Naive thymus-derived CD4-positive, alpha-beta T cell (primary cell): ENCODE measurements at regions of chr7 and their contacts with region 1.

Region 1: GRCh38 chr7:104983578-104984539 is 30.1 kb upstream of the KMT2E start:
- DNase-seq: peak; percentile 78 to 86 (median 84)
- ATAC-seq: peak; percentile 94
- H3K4me3 ChIP-seq: peak overlapping the region; percentile 93
- H3K4me3 Mint-ChIP-seq: peak overlapping the region; percentile 93 to 100 (median 99)
- H3K27ac ChIP-seq: peak overlapping the region; percentile 98
- H3K27ac Mint-ChIP-seq: peak overlapping the region; percentile 98 to 100 (median 100)
- H3K4me1 ChIP-seq: peaks cover 19 to 23% of the 10 kb centered on the region in 2 donors
- H3K4me1 Mint-ChIP-seq: peaks cover 27 to 67% (median 55%) of the 10 kb centered on the region in 7 donors
- H3K27me3 ChIP-seq: no peaks in the 10 kb centered on the region
- H3K27me3 Mint-ChIP-seq: no peaks in the 10 kb centered on the region

Region 2: DNA sequence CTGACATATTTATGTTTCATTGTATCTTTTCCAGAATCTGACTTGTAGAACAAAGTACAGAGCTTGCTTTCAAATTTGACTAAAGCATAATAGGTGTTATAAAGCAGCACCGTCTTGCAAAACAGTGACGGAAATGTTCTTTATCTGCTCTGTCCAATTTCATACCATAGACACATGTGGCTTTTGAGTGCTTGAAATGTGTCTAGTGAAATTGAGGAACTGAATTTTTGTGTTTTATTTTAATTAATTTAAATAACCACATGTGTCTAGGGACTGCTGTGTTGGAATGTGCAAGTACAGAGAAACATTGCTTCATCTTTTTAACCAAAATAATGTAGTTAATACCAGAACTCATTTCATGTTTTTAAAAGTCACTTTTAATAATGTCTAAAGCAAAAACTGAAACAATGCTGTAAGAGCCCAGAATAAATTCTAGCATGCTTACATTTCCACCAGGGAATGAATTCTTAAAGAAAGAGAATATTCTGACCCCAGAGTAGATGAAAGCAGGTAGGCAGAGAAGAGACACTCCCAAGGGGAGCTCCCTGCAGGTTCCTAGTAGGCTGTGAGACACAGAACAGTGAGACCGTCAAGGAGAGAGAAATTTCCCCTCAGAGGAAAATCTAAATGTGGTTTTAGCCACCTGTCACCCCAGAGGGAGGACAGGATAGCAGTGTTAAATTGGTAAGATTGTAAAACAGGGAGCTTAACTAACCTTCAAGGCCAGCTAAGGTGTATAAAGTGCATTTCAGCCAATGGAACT is 145.1 kb before region 1 on chr7:
- CTCF ChIA-PET with region 1: no interaction called
- POLR2A ChIA-PET with region 1: no interaction called
- intact Hi-C with region 1: no loop called
- DNase-seq: no peak
- ATAC-seq: no peak
- H3K4me3 ChIP-seq: no peak overlapping the region
- H3K4me3 Mint-ChIP-seq: no peak overlapping the region
- H3K27ac ChIP-seq: no peak overlapping the region
- H3K27ac Mint-ChIP-seq: no peak overlapping the region
- H3K4me1 ChIP-seq: no peaks in the 10 kb centered on the region
- H3K4me1 Mint-ChIP-seq: peaks cover 0 to 2% (median 0%) of the 10 kb centered on the region in 7 donors
- H3K27me3 ChIP-seq: no peaks in the 10 kb centered on the region
- H3K27me3 Mint-ChIP-seq: peaks cover 22 to 45% (median 42%) of the 10 kb centered on the region in 5 donors

Region 3: DNA sequence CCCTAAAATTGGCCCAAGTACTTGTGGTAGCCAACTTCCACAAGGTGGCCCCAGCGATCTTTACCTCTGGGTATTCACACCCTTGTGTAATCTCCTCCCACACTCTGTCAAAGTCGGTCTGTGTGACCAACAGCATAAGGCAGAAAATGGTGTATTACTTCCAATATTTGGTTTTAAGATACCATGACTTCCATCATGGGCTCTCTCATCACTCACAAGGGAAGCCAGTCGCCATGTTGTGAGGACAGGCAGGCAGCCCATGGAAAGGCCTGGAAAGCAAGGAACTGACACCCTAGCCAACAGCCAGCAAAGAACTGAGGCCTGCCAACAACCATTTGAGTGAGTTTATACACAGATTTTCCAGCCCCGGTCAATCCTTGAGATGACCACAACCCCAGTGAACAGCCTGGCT is 60.8 kb before region 1 on chr7:
- CTCF ChIA-PET with region 1: interaction called, 22 read pairs
- POLR2A ChIA-PET with region 1: no interaction called
- intact Hi-C with region 1: loop called (anchors 1 kb)
- DNase-seq: peak; percentile 40 to 69 (median 62)
- ATAC-seq: peak; percentile 94
- H3K4me3 ChIP-seq: no peak overlapping the region
- H3K4me3 Mint-ChIP-seq: no peak overlapping the region
- H3K27ac ChIP-seq: no peak overlapping the region
- H3K27ac Mint-ChIP-seq: peak overlapping the region in 5 of 9 donors; percentile 46 to 68 (median 55)
- H3K4me1 ChIP-seq: no peaks in the 10 kb centered on the region
- H3K4me1 Mint-ChIP-seq: peaks cover 0 to 7% (median 2%) of the 10 kb centered on the region in 7 donors
- H3K27me3 ChIP-seq: no peaks in the 10 kb centered on the region
- H3K27me3 Mint-ChIP-seq: peaks cover 0 to 6% (median 0%) of the 10 kb centered on the region in 5 donors

Region 4: GRCh38 chr7:105013221-105013815 is 29.5 kb after region 1 on chr7:
- CTCF ChIA-PET with region 1: interaction called, 54 read pairs
- POLR2A ChIA-PET with region 1: interaction called, 639 read pairs
- intact Hi-C with region 1: loop called (anchors 1 kb)
- DNase-seq: peak; percentile 93 to 98 (median 96)
- ATAC-seq: peak; percentile 68
- H3K4me3 ChIP-seq: peak overlapping the region; percentile 99
- H3K4me3 Mint-ChIP-seq: peak overlapping the region; percentile 96 to 100 (median 98)
- H3K27ac ChIP-seq: peak overlapping the region; percentile 97
- H3K27ac Mint-ChIP-seq: peak overlapping the region; percentile 99 to 100 (median 100)
- H3K4me1 ChIP-seq: peaks cover 14 to 24% of the 10 kb centered on the region in 2 donors
- H3K4me1 Mint-ChIP-seq: peaks cover 31 to 50% (median 41%) of the 10 kb centered on the region in 7 donors
- H3K27me3 ChIP-seq: no peaks in the 10 kb centered on the region
- H3K27me3 Mint-ChIP-seq: peaks cover 0 to 8% (median 0%) of the 10 kb centered on the region in 5 donors

Region 5: DNA sequence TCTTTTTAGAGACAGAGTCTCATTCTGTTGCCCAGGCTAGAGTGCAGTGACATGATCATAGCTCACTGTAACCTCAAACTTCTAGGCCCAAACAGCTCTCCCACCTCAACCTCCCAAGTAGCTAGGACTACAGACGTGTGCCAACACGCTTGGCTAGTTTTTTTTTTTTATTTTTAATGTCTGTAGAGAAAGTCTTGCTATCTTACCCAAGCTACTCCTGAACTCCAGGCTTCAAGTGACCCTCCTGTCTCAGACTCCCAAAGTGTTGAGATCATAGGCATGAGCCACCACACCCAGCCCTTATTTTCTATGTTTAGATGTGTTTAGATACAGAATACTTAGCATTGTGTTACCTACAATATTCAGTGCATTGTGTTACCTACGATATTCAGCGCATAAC is 76.6 kb after region 1 on chr7:
- CTCF ChIA-PET with region 1: interaction called, 6 read pairs
- POLR2A ChIA-PET with region 1: no interaction called
- intact Hi-C with region 1: loop called in 1 of 2 experiments (anchors 1 kb)
- DNase-seq: no peak
- ATAC-seq: no peak
- H3K4me3 ChIP-seq: no peak overlapping the region
- H3K4me3 Mint-ChIP-seq: no peak overlapping the region
- H3K27ac ChIP-seq: no peak overlapping the region
- H3K27ac Mint-ChIP-seq: peak overlapping the region in 6 of 9 donors; percentile 12 to 85 (median 75)
- H3K4me1 ChIP-seq: peaks cover 4 to 11% of the 10 kb centered on the region in 2 donors
- H3K4me1 Mint-ChIP-seq: peaks cover 37 to 90% (median 81%) of the 10 kb centered on the region in 7 donors
- H3K27me3 ChIP-seq: no peaks in the 10 kb centered on the region
- H3K27me3 Mint-ChIP-seq: no peaks in the 10 kb centered on the region

Region 6: DNA sequence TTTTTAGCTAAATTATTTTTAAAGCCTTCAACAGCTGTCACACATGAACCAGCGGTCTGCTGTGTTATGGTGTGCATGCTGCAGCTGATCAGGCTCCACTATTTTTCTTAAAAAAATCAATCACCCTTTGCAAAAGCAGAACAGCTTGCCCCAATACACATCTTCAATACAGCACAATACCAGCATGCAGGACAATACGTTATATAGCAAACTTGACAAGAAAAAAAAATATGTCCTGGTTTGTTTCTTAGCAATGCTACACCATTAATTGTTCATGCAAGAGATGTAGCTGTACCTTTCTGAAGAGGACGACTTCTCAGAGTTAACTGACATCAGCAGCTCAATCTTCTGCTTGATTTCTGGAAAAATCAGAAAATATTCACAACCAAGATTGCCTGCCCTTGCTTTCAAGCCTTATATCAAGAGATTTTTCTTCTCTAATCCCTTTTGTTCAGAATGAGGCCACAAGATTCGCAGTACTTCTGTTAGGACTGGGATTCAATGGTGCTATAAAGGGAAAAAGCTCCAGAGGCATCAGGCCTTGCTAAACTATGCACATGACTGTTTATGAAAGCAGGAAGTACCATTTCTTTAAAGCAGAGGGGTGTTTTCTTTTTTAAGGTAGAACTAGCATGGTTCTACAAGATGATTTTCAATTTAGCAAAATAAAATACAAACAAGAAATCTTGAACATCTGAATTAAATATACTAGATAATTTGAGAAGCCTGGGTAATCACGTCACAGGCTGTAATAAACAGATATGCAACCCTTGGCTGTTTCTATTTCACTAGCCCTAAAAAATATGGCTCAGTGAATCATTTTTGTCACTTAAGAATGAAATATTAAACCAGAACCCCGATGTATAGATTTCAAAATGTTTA is 284.9 kb after region 1 on chr7:
- CTCF ChIA-PET with region 1: interaction called, 3 read pairs
- POLR2A ChIA-PET with region 1: interaction called, 4 read pairs
- intact Hi-C with region 1: loop called in 1 of 2 experiments (anchors 2 kb)
- DNase-seq: peak in 6 of 9 donors; percentile 30 to 58 (median 46)
- ATAC-seq: peak; percentile 83
- H3K4me3 ChIP-seq: peak overlapping the region; percentile 51
- H3K4me3 Mint-ChIP-seq: peak overlapping the region; percentile 85 to 100 (median 94)
- H3K27ac ChIP-seq: peak overlapping the region; percentile 69
- H3K27ac Mint-ChIP-seq: peak overlapping the region; percentile 81 to 96 (median 91)
- H3K4me1 ChIP-seq: peaks cover 13 to 25% of the 10 kb centered on the region in 2 donors
- H3K4me1 Mint-ChIP-seq: peaks cover 34 to 84% (median 71%) of the 10 kb centered on the region in 7 donors
- H3K27me3 ChIP-seq: no peaks in the 10 kb centered on the region
- H3K27me3 Mint-ChIP-seq: no peaks in the 10 kb centered on the region

Region 7: GRCh38 chr7:105429746-105430612 is 446.1 kb after region 1 on chr7:
- CTCF ChIA-PET with region 1: interaction called, 10 read pairs
- POLR2A ChIA-PET with region 1: interaction called, 3 read pairs
- intact Hi-C with region 1: loop called (anchors 1 kb)
- DNase-seq: peak in 8 of 9 donors; percentile 9 to 66 (median 58)
- ATAC-seq: peak; percentile 76
- H3K4me3 ChIP-seq: no peak overlapping the region
- H3K4me3 Mint-ChIP-seq: no peak overlapping the region
- H3K27ac ChIP-seq: no peak overlapping the region
- H3K27ac Mint-ChIP-seq: peak overlapping the region in 1 of 9 donors; percentile 19
- H3K4me1 ChIP-seq: no peaks in the 10 kb centered on the region
- H3K4me1 Mint-ChIP-seq: peaks cover 0 to 5% (median 0%) of the 10 kb centered on the region in 7 donors
- H3K27me3 ChIP-seq: no peaks in the 10 kb centered on the region
- H3K27me3 Mint-ChIP-seq: no peaks in the 10 kb centered on the region